OCI-LY7 (cell line): ENCODE measurements at regions of chr11 and their contacts with region 1.

Region 1: DNA sequence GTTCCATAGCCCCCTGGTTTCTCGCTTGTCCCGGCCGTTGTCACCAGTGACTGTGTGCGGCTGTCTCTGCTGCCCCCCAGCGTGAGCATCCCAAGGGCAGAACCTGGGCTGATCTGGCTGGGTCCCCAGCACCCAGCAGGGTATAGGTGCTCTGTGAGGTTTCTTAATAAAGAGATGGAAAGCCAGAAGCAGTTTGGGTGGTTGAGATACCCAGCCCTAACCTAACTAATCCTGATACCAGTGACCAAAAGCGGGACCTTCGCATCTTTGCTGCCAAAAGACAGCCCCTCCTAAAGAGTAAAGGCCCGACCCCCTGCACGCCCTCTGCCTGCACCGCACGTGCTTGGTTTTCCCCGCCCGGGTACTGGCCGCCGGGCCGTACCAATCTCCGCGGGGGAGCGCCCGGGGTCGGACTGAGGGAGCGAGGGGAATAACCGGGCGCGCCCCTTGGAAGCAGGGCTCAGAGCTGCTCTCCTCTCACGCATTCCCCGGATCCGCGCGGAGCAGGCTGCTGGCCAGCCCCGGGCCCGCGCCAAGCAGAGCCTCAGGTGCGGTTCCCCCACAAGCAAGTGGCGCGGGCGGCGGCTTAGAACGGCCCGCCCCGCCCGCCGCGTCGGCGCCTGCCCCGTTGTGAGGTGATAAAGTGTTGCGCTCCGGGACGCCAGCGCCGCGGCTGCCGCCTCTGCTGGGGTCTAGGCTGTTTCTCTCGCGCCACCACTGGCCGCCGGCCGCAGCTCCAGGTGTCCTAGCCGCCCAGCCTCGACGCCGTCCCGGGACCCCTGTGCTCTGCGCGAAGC is at the start of gene DGAT2:
- DNase-seq: peak; percentile 90
- H3K4me3 ChIP-seq: peak within 1 kb of the TSS; percentile 72
- H3K27ac ChIP-seq: peak within 1 kb of the TSS; percentile 47
- H3K4me1 ChIP-seq: peaks cover 57% of the 10 kb centered on the region
- CTCF ChIP-seq: peak; percentile 90
- total RNA-seq, gene DGAT2: 6.5 and 13.8 TPM in 2 replicates

Region 2: GRCh38 chr11:75547580-75548058 is 220.7 kb before region 1 on chr11:
- CTCF ChIA-PET with region 1: no interaction called
- POLR2A ChIA-PET with region 1: no interaction called
- intact Hi-C with region 1: loop called (anchors 1 kb)
- DNase-seq: peak; percentile 41
- H3K4me3 ChIP-seq: no peak overlapping the region
- H3K27ac ChIP-seq: no peak overlapping the region
- H3K4me1 ChIP-seq: no peaks in the 10 kb centered on the region
- CTCF ChIP-seq: peak; percentile 83

Region 3: GRCh38 chr11:75597636-75598035 is 170.7 kb before region 1 on chr11:
- CTCF ChIA-PET with region 1: no interaction called
- POLR2A ChIA-PET with region 1: no interaction called
- intact Hi-C with region 1: loop called (anchors 5 kb)
- DNase-seq: peak; percentile 39
- H3K4me3 ChIP-seq: no peak overlapping the region
- H3K27ac ChIP-seq: no peak overlapping the region
- H3K4me1 ChIP-seq: peaks cover 6% of the 10 kb centered on the region
- CTCF ChIP-seq: peak; percentile 84

Region 4: GRCh38 chr11:75706260-75706729 is 62.0 kb before region 1 on chr11:
- CTCF ChIA-PET with region 1: no interaction called
- POLR2A ChIA-PET with region 1: no interaction called
- intact Hi-C with region 1: loop called (anchors 2 kb)
- DNase-seq: peak; percentile 65
- H3K4me3 ChIP-seq: no peak overlapping the region
- H3K27ac ChIP-seq: no peak overlapping the region
- H3K4me1 ChIP-seq: no peaks in the 10 kb centered on the region
- CTCF ChIP-seq: peak; percentile 84

Region 5: GRCh38 chr11:75721855-75722668 is 46.2 kb before region 1 on chr11:
- CTCF ChIA-PET with region 1: no interaction called
- POLR2A ChIA-PET with region 1: no interaction called
- intact Hi-C with region 1: loop called (anchors 1 kb)
- DNase-seq: no peak
- H3K4me3 ChIP-seq: no peak overlapping the region
- H3K27ac ChIP-seq: no peak overlapping the region
- H3K4me1 ChIP-seq: no peaks in the 10 kb centered on the region
- CTCF ChIP-seq: no peak